ENCODE measurements at regions of chr2 and their contacts with region 1.

Region 1: GRCh38 chr2:20446917-20447436 is at the start of gene RHOB:
- DNase-seq: peak; percentile 94
- H3K4me3 Mint-ChIP-seq: peak within 1 kb of the TSS; percentile 76
- H3K27ac Mint-ChIP-seq: peak within 1 kb of the TSS; percentile 23
- H3K4me1 Mint-ChIP-seq: peaks cover 10% of the 10 kb centered on the region
- H3K27me3 Mint-ChIP-seq: peaks cover 8% of the 10 kb centered on the region
- total RNA-seq, gene RHOB: 31.6 to 33.6 TPM

Region 2: GRCh38 chr2:20350753-20351554 is 96.0 kb before region 1 on chr2 and contains the start of gene PUM2:
- CTCF ChIA-PET with region 1: no interaction called
- POLR2A ChIA-PET with region 1: interaction called, 6 read pairs
- intact Hi-C with region 1: loop called (anchors 1 kb)
- DNase-seq: peak; percentile 97
- H3K4me3 Mint-ChIP-seq: no peak within 1 kb of the TSS
- H3K27ac Mint-ChIP-seq: peak within 1 kb of the TSS; percentile 93
- H3K4me1 Mint-ChIP-seq: peaks cover 31% of the 10 kb centered on the region
- H3K27me3 Mint-ChIP-seq: no peaks in the 10 kb centered on the region
- total RNA-seq, gene PUM2: 122 TPM

Region 3: DNA sequence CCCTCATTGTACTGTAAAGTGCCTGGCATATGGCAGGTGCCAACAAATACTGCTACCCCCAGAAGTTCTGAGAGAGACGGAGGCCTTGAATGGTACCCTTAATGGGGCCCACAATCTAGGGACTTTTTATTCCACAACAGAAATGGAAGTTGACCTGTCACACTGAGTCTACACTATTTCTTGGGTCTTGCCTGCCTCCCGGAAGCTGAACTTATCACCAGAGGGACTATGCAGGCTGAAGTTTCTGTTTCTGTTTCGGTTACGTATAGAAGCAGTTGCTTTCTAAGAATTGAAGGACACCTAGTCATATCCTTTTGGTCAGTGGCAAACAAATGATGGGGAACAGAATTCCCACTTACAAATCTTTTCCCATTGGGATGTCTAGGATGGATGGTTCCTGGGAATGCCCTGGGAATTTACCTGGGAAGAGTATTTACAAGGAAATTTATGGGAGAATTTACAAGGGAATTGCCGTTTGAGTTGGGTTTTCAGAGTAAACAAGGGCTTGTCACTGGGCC is 129.7 kb after region 1 on chr2:
- CTCF ChIA-PET with region 1: no interaction called
- POLR2A ChIA-PET with region 1: interaction called, 10 read pairs
- intact Hi-C with region 1: loop called (anchors 1 kb)
- DNase-seq: peak; percentile 55
- H3K4me3 Mint-ChIP-seq: peak overlapping the region; percentile 11
- H3K27ac Mint-ChIP-seq: peak overlapping the region; percentile 86
- H3K4me1 Mint-ChIP-seq: peaks cover 32% of the 10 kb centered on the region
- H3K27me3 Mint-ChIP-seq: no peaks in the 10 kb centered on the region

Region 4: GRCh38 chr2:20635675-20636584 is 189.0 kb after region 1 on chr2:
- CTCF ChIA-PET with region 1: interaction called, 144 read pairs
- POLR2A ChIA-PET with region 1: no interaction called
- intact Hi-C with region 1: loop called (anchors 1 kb)
- DNase-seq: peak; percentile 69
- H3K4me3 Mint-ChIP-seq: no peak overlapping the region
- H3K27ac Mint-ChIP-seq: no peak overlapping the region
- H3K4me1 Mint-ChIP-seq: no peaks in the 10 kb centered on the region
- H3K27me3 Mint-ChIP-seq: no peaks in the 10 kb centered on the region